Activated T-helper 1 cell treated with anti-CD3 and anti-CD28 coated beads, Interleukin-12 subunit alpha, Interleukin-12 subunit beta, Interleukin-2, Interleukin-4 antibody, amounts not matched to agents 30 ng/mL and 10 ng/mL and 1 ng/mL, durations not matched to agents 14 hours and 24 hours and 36 hours (primary cell): ENCODE measurements at regions of chr11 and their contacts with region 1.

Region 1: DNA sequence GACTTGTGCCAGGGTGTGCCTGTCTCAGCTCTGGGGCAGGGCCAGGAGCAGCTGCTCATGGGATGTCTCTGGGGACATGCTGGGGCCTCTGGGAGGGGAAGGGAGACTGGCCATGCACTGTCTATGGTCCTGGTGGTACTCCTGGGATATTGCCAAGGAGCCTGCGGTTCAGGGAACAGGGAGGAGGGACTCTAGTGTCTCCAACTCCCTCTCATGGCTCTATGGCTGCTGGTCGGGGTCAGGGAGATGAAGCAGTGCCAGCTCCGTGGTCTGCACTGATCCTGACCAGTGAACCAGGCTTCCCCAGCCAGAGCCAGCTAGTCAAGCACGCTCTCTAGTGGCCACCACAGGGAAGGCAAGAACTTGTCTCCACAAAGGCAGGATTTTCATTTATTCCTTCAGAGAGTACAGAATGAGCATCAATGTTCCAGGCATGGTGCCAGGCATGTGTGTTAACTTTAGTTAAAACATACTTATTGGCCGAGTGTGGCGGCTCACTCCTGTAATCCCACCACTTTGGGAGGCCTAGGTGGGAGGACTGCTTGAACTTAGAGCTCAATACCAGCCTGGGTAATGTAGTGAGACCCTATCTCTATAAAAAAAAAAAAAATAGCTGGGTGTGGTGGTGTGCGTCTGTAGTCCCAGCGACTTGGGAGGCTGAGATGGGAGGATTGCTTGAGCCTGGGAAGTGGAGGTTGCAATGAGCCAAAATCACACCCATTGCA is 2.5 kb upstream of the BEST1 start:
- DNase-seq: peak; percentile 46
- H3K4me3 Mint-ChIP-seq: no peak overlapping the region
- H3K27ac Mint-ChIP-seq: no peak overlapping the region
- H3K4me1 Mint-ChIP-seq: no peaks in the 10 kb centered on the region
- H3K27me3 Mint-ChIP-seq: peaks cover 7% of the 10 kb centered on the region

Region 2: GRCh38 chr11:61446211-61446651 is 501.4 kb before region 1 on chr11:
- intact Hi-C with region 1: no loop called
- DNase-seq: peak; percentile 71
- H3K4me3 Mint-ChIP-seq: no peak overlapping the region
- H3K27ac Mint-ChIP-seq: no peak overlapping the region
- H3K4me1 Mint-ChIP-seq: peaks cover 34% of the 10 kb centered on the region
- H3K27me3 Mint-ChIP-seq: no peaks in the 10 kb centered on the region

Region 3: GRCh38 chr11:61899146-61899841 is 48.4 kb before region 1 on chr11:
- intact Hi-C with region 1: loop called (anchors 1 kb)
- DNase-seq: peak; percentile 86
- H3K4me3 Mint-ChIP-seq: no peak overlapping the region
- H3K27ac Mint-ChIP-seq: no peak overlapping the region
- H3K4me1 Mint-ChIP-seq: peaks cover 5% of the 10 kb centered on the region
- H3K27me3 Mint-ChIP-seq: peaks cover 4% of the 10 kb centered on the region

Region 4: DNA sequence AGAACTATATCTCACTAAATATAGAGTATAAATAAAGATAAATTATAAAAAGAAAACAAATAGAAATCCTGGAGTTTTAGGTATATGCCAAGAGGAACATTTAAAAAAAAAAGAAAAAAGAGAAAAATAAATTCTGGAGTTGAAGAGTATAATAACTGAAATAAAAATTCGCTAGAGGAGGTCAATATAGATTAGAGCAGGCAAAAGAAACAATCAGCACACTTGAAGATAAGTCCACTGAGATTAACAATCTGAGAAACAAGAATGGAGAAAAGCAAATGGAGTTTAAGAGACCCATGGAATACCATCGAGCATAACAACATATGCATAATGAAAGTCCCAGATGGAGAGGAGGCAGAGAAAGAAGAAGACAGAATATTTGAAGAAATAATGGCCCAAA is 11.8 kb before region 1 on chr11:
- intact Hi-C with region 1: no loop called
- DNase-seq: no peak
- H3K4me3 Mint-ChIP-seq: no peak overlapping the region
- H3K27ac Mint-ChIP-seq: no peak overlapping the region
- H3K4me1 Mint-ChIP-seq: no peaks in the 10 kb centered on the region
- H3K27me3 Mint-ChIP-seq: peaks cover 30% of the 10 kb centered on the region

Region 5: DNA sequence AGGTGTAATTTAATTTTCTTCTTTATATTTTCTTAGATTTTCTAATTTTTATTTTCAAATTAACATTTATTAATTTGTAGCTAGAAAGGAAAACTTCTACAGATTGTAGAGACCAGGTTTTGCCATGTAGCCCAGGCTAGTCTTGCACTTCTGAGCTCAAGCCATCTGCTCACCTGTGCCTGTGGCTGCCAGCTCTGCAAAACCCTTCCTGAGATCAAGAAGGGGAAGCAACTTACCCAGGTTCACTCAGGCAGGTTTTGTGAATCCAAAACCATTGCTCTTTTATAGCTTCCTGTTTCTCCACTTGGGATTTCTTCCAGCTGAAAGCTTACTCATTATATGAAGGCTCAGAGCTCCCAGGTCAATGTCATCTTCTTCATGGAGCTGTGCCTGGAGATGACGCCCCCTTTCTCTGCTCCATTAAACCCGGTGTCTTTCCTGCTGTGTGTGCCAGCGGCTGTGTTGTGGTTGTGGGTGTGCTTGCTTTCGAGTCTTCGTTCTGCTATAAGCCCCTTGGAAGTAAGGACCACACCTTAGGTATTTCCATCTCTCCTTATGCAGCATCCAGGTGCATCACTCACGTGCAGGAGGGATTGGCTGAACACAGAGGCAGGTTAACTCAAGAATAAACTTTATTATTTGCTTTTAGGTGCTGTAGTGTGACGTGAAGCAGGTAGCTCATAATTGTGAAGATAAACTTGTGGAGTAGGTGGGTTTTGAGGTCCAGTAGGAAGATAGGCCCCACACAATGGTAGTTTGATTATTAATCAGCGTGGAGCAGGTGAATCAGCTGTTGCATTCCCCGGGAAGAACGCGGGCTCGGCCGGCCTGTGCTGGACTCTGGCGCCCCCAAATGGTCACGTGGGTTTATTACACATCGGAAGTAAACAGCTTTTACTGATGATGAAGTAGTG is 134.0 kb after region 1 on chr11:
- intact Hi-C with region 1: loop called (anchors 1 kb)
- DNase-seq: peak; percentile 61
- H3K4me3 Mint-ChIP-seq: no peak overlapping the region
- H3K27ac Mint-ChIP-seq: no peak overlapping the region
- H3K4me1 Mint-ChIP-seq: peaks cover 7% of the 10 kb centered on the region
- H3K27me3 Mint-ChIP-seq: no peaks in the 10 kb centered on the region

Region 6: DNA sequence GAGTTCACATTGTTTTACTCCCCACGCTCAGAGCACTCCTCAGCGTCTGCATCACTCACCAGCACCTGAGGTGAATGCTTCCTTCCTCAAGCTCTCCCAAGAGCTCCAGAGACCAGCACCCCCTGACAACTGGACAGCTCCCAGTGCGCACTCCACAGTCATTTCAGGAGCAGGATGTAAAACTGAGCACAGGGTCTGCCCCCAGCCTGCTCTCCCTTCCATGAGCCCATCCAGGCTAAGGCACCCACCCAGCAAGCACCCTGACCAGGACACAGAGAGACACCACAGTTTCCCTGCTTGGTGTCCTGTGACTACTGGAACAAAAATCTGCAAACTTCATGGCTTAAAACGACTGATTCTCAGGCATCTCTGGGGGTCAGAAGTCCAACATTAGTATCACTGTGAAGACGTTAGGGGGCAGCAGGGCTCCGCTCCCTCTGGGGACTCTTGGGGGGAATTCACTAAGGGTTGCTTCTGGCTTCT is 297.7 kb after region 1 on chr11:
- intact Hi-C with region 1: loop called (anchors 5 kb)
- DNase-seq: no peak
- H3K4me3 Mint-ChIP-seq: no peak overlapping the region
- H3K27ac Mint-ChIP-seq: no peak overlapping the region
- H3K4me1 Mint-ChIP-seq: no peaks in the 10 kb centered on the region
- H3K27me3 Mint-ChIP-seq: peaks cover 9% of the 10 kb centered on the region